Colonic mucosa (tissue), 4 donors: ENCODE measurements at regions of chr2 and their contacts with region 1.

Region 1: GRCh38 chr2:17851731-17852585 is 26.5 kb upstream of the KCNS3 start:
- DNase-seq: peak; percentile 49
- H3K4me3 ChIP-seq: no peak overlapping the region
- H3K27ac ChIP-seq: no peak overlapping the region
- H3K4me1 ChIP-seq: no peaks in the 10 kb centered on the region
- H3K27me3 ChIP-seq: no peaks in the 10 kb centered on the region
- CTCF ChIP-seq: peak; percentile 87

Region 2: DNA sequence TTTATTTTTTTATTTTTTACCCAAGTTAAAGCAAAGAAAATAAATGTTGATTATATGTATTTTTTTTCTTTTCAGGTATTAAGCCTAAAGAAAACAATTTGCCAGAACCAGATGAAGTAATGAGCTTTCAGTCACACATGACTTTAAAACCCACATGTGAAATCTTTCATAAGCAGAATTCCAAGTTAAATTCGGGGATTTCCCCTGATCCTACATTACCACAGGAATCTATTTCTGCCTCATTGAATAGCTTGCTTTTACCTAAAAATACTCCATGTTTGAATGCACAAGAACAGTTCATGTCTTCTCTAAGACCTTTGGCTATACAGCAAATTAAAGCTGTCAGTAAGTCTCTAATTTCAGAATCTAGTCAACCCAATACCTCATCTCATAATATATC is 71.4 kb before region 1 on chr2:
- intact Hi-C with region 1: no loop called
- DNase-seq: no peak
- H3K4me3 ChIP-seq: no peak overlapping the region
- H3K27ac ChIP-seq: no peak overlapping the region
- H3K4me1 ChIP-seq: no peaks in the 10 kb centered on the region
- H3K27me3 ChIP-seq: no peaks in the 10 kb centered on the region
- CTCF ChIP-seq: no peak

Region 3: GRCh38 chr2:18117592-18117991 is 265.6 kb after region 1 on chr2:
- intact Hi-C with region 1: loop called (anchors 10 kb)
- DNase-seq: peak; percentile 38
- H3K4me3 ChIP-seq: no peak overlapping the region
- H3K27ac ChIP-seq: no peak overlapping the region
- H3K4me1 ChIP-seq: no peaks in the 10 kb centered on the region
- H3K27me3 ChIP-seq: no peaks in the 10 kb centered on the region
- CTCF ChIP-seq: peak; percentile 34

Region 4: DNA sequence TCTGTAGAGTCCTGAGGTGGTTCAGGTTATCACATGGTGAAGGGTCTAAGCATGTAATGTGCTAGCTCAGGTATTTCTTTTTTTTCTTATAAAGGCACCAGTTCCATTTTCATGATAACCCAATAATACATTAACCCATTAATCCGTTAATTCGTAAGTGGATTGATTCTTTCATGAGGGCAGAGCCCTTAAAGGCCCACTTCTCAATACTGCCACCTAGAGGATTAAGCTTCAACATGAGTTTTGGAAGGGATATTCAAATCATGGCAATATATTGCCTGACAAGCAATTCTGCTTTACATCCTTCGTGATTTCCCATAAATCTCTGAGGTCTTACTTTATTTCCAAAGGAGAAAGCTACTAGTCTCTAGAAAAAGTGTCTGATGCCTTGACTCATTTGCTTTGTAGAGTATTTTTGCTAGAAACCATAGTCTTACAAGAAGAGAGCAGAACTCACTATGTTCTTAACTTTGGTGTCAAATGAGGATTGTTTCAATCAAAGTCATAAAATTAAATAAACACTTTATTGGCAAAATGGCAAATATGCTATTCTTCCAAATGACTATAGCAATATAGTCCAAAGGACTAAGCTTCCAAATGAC is 297.8 kb after region 1 on chr2:
- intact Hi-C with region 1: loop called (anchors 5 kb)
- DNase-seq: no peak
- H3K4me3 ChIP-seq: no peak overlapping the region
- H3K27ac ChIP-seq: no peak overlapping the region
- H3K4me1 ChIP-seq: no peaks in the 10 kb centered on the region
- H3K27me3 ChIP-seq: no peaks in the 10 kb centered on the region
- CTCF ChIP-seq: peak; percentile 66